Heart left ventricle (tissue), 16 donors: ENCODE measurements at regions of chr10 and their contacts with region 1.

Region 1: DNA sequence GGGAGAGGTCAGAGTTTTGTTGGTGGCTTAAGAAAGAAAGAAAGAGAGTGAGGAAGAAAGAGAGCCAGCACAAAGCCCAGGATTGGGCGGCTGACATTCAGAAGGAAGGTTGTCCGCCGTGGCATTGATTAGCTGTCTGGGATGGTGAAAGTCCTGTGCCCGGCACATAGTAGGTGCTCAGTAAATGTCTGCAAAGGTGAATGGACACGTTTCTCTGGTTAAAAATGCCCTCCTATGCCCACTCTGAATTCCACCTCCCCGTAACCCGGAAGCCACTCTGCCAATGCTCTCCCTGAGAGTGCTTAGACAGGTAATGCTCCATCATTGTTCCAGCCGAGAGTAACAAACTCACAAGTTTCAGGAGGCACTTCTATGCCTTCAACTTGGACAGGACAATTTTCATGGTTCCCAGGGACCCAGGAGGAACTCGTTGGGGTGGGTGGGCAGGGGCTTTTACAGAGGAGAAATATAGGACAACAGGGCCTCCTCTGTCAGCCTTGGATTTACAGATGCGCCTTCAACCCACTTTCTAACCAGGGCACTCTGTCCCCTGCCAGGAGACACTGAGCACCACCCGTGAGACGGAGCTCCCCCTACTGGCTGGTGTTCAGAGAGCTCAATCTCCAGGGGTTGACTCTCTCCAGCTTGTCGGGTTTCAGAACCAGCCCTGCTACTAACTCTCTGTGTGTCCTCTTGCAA is 411.5 kb upstream of the ZMIZ1 start:
- DNase-seq: peak; percentile 72 to 84 (median 76)
- ATAC-seq: peak; percentile 81 to 94 (median 92)
- H3K4me3 ChIP-seq: no peak overlapping the region
- H3K27ac ChIP-seq: peak overlapping the region in 1 of 12 donors; percentile 45
- H3K4me1 ChIP-seq: peaks cover 0 to 5% (median 0%) of the 10 kb centered on the region in 12 donors
- H3K27me3 ChIP-seq: no peaks in the 10 kb centered on the region
- CTCF ChIP-seq: peak; percentile 55 to 77 (median 66)
- POLR2A ChIP-seq: no peak

Region 2: GRCh38 chr10:78205457-78206016 is 451.8 kb before region 1 on chr10:
- intact Hi-C with region 1: loop called in 7 of 10 experiments (anchors 5 to 10 kb)
- DNase-seq: no peak
- ATAC-seq: no peak
- H3K4me3 ChIP-seq: no peak overlapping the region
- H3K27ac ChIP-seq: no peak overlapping the region
- H3K4me1 ChIP-seq: peaks cover 0 to 15% (median 4%) of the 10 kb centered on the region in 12 donors
- H3K27me3 ChIP-seq: no peaks in the 10 kb centered on the region
- CTCF ChIP-seq: no peak
- POLR2A ChIP-seq: no peak

Region 3: DNA sequence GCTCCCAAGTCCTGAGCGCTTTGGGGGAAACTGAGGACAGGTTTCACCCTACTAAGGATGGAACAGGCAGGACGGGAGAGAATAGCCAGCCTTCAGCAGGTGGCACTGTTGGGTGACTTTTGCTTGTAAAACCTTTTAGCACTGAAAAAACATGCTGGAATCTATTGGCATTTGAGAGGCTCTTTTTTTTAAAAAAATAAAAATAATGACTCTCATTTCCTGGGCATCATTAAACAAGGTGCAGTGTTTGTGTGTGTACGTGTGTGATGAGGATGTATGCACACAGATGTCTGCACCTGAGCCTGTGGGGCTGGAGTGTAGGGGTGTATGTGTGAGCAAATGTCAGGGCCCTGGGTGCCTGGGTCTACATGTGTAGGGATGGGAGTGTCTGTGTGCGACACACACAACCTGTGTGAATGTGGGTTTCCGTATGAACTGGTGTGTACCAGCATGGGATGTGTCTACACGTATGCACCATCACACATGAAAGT is 445.7 kb before region 1 on chr10:
- intact Hi-C with region 1: loop called in 7 of 10 experiments (anchors 5 to 10 kb)
- DNase-seq: peak in 1 of 5 donors; percentile 47
- ATAC-seq: peak in 3 of 4 donors; percentile 5 to 18 (median 9)
- H3K4me3 ChIP-seq: no peak overlapping the region
- H3K27ac ChIP-seq: peak overlapping the region in 5 of 12 donors; percentile 19 to 62 (median 52)
- H3K4me1 ChIP-seq: peaks cover 0 to 38% (median 19%) of the 10 kb centered on the region in 12 donors
- H3K27me3 ChIP-seq: no peaks in the 10 kb centered on the region
- CTCF ChIP-seq: peak in 11 of 12 donors; percentile 21 to 69 (median 55)
- POLR2A ChIP-seq: no peak

Region 4: DNA sequence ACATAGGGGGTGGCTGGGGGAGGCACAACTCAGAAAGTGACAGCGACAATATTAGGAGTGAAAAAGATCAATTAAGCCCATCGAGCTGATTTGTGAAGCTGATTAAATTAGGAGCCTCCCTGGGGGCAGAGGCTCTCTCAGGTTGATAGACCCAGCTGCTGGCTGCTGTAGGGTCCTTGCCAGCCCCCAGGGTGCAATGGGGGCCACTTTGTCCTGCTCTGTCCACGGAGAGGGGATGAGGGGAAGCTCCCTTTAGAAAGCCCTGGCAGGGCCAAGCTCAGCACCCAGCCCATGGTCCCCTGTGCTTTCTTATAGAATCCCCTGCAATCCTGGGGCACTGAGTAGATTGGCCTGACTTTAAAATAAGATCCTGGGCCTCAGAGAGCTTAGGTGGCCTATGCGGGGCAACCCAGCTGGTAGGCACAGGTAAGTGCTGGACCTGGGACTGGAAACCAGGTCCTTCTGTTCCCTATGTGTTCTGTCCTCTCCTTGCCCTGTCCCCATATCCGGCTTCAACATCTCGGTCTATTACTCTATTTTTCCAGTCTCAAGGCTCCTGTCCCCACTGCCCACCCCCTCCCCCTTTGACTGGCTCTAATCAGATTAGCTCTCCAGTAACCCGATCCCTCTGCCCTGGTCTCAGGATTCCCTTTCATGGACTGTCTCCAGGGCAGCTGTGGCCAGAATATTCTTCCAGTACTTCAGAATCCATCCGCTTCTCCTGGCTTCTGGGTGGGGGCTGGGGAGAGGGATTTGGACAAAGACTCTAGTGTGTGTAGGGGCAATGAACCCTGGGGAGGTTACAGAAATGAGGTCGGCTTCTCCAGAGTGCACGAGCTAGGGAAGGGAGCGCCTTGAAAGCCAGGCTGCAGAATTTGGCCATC is 364.1 kb before region 1 on chr10:
- intact Hi-C with region 1: loop called in 1 of 10 experiments (anchors 10 kb)
- DNase-seq: no peak
- ATAC-seq: no peak
- H3K4me3 ChIP-seq: no peak overlapping the region
- H3K27ac ChIP-seq: no peak overlapping the region
- H3K4me1 ChIP-seq: peaks cover 0 to 5% (median 0%) of the 10 kb centered on the region in 12 donors
- H3K27me3 ChIP-seq: no peaks in the 10 kb centered on the region
- CTCF ChIP-seq: no peak
- POLR2A ChIP-seq: no peak

Region 5: GRCh38 chr10:78458983-78459638 is 198.2 kb before region 1 on chr10:
- intact Hi-C with region 1: no loop called
- DNase-seq: no peak
- ATAC-seq: peak in 3 of 4 donors; percentile 63 to 74 (median 71)
- H3K4me3 ChIP-seq: no peak overlapping the region
- H3K27ac ChIP-seq: no peak overlapping the region
- H3K4me1 ChIP-seq: peaks cover 0 to 9% (median 0%) of the 10 kb centered on the region in 12 donors
- H3K27me3 ChIP-seq: no peaks in the 10 kb centered on the region
- CTCF ChIP-seq: no peak
- POLR2A ChIP-seq: no peak

Region 6: DNA sequence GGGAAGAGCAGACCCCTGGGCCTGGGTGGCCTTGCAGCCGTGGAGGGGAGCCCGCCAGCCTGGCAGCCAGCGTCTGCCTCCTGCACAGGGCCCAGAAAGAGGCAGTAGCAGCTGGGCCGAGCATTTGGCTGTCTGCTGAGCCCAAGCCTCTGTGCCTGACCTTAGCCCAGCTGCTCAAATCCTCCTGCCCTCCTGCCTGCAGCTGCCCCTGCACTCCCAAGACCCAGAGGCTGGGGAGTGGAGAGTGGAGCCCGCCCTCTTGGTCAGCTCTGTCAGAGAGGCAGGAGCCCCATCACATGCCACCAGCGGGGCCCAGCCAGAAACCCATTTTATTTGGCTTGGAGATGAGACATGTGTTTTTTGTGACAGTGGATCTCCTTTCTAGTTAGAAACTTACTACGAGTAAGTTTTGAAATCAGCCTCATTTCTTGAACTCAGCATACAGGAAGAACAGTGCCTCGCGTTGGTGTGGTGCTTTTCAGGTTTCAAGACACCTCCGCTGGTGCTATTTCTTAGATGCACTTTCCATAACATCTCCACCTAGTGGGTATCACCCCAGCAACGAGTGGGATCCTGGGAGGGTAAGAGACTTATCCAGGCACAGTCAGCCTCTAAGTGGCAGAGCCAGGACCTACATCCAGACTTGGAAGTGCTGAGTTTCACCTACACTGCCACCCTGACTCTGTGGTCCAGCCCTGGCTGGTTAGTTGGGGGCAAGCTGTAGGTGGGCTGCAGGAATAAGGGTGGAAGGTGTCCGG is 146.6 kb before region 1 on chr10:
- intact Hi-C with region 1: no loop called
- DNase-seq: peak in 2 of 5 donors; percentile 64
- ATAC-seq: peak in 2 of 4 donors; percentile 29 to 61
- H3K4me3 ChIP-seq: no peak overlapping the region
- H3K27ac ChIP-seq: peak overlapping the region in 5 of 12 donors; percentile 17 to 79 (median 29)
- H3K4me1 ChIP-seq: peaks cover 0 to 44% (median 0%) of the 10 kb centered on the region in 12 donors
- H3K27me3 ChIP-seq: no peaks in the 10 kb centered on the region
- CTCF ChIP-seq: no peak
- POLR2A ChIP-seq: no peak

Region 7: GRCh38 chr10:78846760-78847159 is 189.4 kb after region 1 on chr10:
- intact Hi-C with region 1: no loop called
- DNase-seq: peak; percentile 53 to 68 (median 66)
- ATAC-seq: peak; percentile 88 to 95 (median 90)
- H3K4me3 ChIP-seq: no peak overlapping the region
- H3K27ac ChIP-seq: no peak overlapping the region
- H3K4me1 ChIP-seq: no peaks in the 10 kb centered on the region
- H3K27me3 ChIP-seq: no peaks in the 10 kb centered on the region
- CTCF ChIP-seq: no peak
- POLR2A ChIP-seq: no peak